Naive thymus-derived CD8-positive, alpha-beta T cell (primary cell): ENCODE measurements at regions of chr14 and their contacts with region 1.

Region 1: DNA sequence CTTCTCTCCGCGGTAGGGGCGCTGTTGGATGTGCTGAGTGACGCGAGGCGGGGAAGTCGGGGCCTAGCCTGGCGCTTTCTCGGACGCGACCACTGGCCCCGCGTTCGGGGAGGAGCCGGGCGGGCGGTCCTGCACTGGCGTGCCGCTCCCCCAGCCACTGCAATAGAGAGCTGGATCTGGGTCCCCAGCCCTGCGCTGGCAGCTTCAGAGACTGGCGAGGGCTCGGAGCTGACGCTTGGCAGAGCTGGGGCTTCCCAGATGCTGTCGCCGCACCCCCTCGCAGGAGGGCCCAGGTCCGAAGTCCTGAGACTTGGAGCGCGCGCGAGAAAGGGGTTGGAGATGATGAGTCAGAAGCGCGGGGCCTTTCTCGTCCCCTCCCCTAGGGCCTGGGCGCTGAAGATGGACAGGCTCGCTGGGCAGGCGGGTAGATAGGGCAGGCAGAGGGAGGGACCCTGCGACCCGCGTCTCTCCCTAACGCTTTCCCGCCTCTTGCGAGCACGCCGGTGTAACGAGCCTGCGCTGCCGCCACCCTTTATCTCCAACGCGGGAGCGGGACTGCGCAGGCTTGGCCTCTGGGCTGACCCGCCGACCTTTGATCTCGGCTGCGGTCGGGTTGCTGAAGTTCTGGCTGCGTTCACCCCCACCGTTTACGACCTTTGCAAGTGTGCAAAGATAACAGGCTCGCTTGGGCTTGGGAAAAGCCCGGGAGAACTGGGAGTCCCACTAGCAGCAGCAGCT is 3.0 kb downstream of the TMEM253 start:
- DNase-seq: peak; percentile 82 to 97 (median 93)
- ATAC-seq: peak; percentile 84
- H3K4me3 Mint-ChIP-seq: peak overlapping the region; percentile 65 to 95 (median 90)
- H3K27ac Mint-ChIP-seq: peak overlapping the region; percentile 85 to 98 (median 92)
- H3K4me1 Mint-ChIP-seq: peaks cover 11 to 33% (median 26%) of the 10 kb centered on the region in 4 donors
- H3K27me3 Mint-ChIP-seq: peaks cover 0 to 2% (median 0%) of the 10 kb centered on the region in 5 donors

Region 2: DNA sequence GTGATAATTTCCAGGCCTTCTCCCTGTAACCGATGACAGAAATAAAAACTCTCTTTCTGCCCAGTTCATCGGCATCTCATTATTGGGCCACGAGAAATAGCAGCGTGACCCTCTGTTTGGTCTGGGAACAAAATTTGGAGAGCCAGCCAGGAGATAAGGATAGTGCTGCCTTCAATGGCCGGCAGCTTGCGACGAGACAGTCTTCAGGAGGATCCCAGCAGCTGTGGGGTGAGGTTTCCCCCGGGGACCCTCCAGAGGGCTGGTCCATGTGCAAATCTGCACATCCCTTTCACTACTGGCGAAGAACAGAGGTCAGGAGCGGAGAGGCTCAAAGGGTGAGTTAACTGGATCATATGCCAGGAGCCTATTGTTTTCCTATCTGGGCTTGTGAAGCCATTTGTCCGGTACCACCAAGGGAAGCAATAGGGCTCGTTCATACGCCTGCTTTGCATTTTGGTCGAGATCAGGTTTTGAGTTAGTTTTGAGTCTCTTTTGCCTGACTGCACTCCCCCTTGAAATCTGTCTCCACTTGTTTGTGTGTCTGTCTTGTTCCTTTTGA is 100.0 kb before region 1 on chr14:
- POLR2A ChIA-PET with region 1: no interaction called
- DNase-seq: no peak
- ATAC-seq: no peak
- H3K4me3 Mint-ChIP-seq: no peak overlapping the region
- H3K27ac Mint-ChIP-seq: no peak overlapping the region
- H3K4me1 Mint-ChIP-seq: peaks cover 0 to under 1% (median 0%) of the 10 kb centered on the region in 4 donors
- H3K27me3 Mint-ChIP-seq: no peaks in the 10 kb centered on the region

Region 3: GRCh38 chr14:21014761-21015190 is 89.1 kb before region 1 on chr14:
- POLR2A ChIA-PET with region 1: interaction called, 15 read pairs
- DNase-seq: peak; percentile 66 to 88 (median 78)
- ATAC-seq: peak; percentile 83 to 95
- H3K4me3 Mint-ChIP-seq: no peak overlapping the region
- H3K27ac Mint-ChIP-seq: no peak overlapping the region
- H3K4me1 Mint-ChIP-seq: peaks cover 0 to 2% (median under 1%) of the 10 kb centered on the region in 4 donors
- H3K27me3 Mint-ChIP-seq: peaks cover 11 to 29% (median 15%) of the 10 kb centered on the region in 5 donors

Region 4: GRCh38 chr14:21024585-21025370 is 79.1 kb before region 1 on chr14 and contains the start of gene NDRG2:
- POLR2A ChIA-PET with region 1: interaction called, 12 read pairs
- DNase-seq: peak; percentile 58 to 88 (median 74)
- ATAC-seq: peak; percentile 88 to 90
- H3K4me3 Mint-ChIP-seq: peak within 1 kb of the TSS; percentile 86 to 96 (median 93)
- H3K27ac Mint-ChIP-seq: peak within 1 kb of the TSS; percentile 61 to 94 (median 88)
- H3K4me1 Mint-ChIP-seq: peaks cover 21 to 26% (median 24%) of the 10 kb centered on the region in 4 donors
- H3K27me3 Mint-ChIP-seq: peaks cover 0 to 7% (median 0%) of the 10 kb centered on the region in 5 donors
- polyA plus RNA-seq, gene NDRG2: 24.6 to 32.7 (median 28.3) TPM

Region 5: DNA sequence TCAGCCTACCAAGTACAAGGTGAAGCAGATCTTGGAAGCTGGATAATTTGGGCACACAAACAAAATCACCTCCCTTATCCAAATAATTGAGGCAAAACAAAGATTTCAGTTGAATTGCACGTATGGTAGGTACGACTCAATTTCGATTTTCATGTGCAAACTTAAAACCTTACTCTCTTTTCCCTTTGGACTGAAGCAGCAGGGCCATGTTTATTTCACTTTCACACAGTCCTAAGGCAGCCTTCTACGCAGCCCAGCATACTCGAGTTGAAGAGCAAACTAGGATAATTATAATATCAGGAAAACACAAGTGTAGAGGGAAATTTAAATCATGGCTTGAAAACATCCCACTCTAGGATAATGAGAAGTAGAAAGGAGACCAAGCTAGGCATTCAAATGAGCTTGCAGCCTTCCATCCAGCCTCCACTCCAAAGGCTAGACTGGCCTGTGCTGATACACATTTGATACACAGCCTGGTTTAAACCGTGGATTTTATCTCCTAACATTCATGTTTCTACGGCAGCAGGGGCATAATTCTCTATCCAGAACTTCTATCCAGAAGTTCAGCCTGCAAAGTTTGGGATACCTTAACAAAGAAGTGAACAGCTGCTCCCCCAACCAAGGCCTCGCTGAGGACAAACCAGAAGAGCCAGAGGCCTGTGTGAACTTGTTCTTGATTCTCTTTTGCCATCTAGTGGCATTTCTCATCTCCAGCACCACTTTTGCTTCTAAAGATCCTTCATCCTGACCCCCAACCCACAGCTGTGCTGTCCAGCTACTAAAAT is 64.1 kb before region 1 on chr14:
- POLR2A ChIA-PET with region 1: no interaction called
- DNase-seq: peak in 7 of 10 donors; percentile 8 to 65 (median 37)
- ATAC-seq: peak; percentile 85 to 91
- H3K4me3 Mint-ChIP-seq: no peak overlapping the region
- H3K27ac Mint-ChIP-seq: no peak overlapping the region
- H3K4me1 Mint-ChIP-seq: peaks cover 6 to 8% (median 7%) of the 10 kb centered on the region in 4 donors
- H3K27me3 Mint-ChIP-seq: peaks cover 6 to 19% (median 12%) of the 10 kb centered on the region in 5 donors

Region 6: GRCh38 chr14:21071225-21072030 is 32.5 kb before region 1 on chr14:
- POLR2A ChIA-PET with region 1: interaction called, 13 read pairs
- DNase-seq: peak in 6 of 10 donors; percentile 13 to 46 (median 29)
- ATAC-seq: peak; percentile 35 to 46
- H3K4me3 Mint-ChIP-seq: peak overlapping the region; percentile 71 to 91 (median 84)
- H3K27ac Mint-ChIP-seq: peak overlapping the region in 7 of 10 donors; percentile 59 to 92 (median 85)
- H3K4me1 Mint-ChIP-seq: peaks cover 20 to 39% (median 36%) of the 10 kb centered on the region in 4 donors
- H3K27me3 Mint-ChIP-seq: peaks cover 33 to 72% (median 50%) of the 10 kb centered on the region in 5 donors

Region 7: GRCh38 chr14:21092273-21093011 is 11.4 kb before region 1 on chr14:
- POLR2A ChIA-PET with region 1: interaction called, 66 read pairs
- DNase-seq: peak; percentile 81 to 96 (median 92)
- ATAC-seq: peak; percentile 61 to 69
- H3K4me3 Mint-ChIP-seq: peak overlapping the region in 1 of 10 donors; percentile 14
- H3K27ac Mint-ChIP-seq: peak overlapping the region in 9 of 10 donors; percentile 25 to 92 (median 89)
- H3K4me1 Mint-ChIP-seq: peaks cover 25 to 40% (median 28%) of the 10 kb centered on the region in 4 donors
- H3K27me3 Mint-ChIP-seq: peaks cover 0 to 2% (median 0%) of the 10 kb centered on the region in 5 donors